Gastrocnemius medialis (tissue), 4 donors: ENCODE measurements at regions of chr20 and their contacts with region 1.

Region 1: DNA sequence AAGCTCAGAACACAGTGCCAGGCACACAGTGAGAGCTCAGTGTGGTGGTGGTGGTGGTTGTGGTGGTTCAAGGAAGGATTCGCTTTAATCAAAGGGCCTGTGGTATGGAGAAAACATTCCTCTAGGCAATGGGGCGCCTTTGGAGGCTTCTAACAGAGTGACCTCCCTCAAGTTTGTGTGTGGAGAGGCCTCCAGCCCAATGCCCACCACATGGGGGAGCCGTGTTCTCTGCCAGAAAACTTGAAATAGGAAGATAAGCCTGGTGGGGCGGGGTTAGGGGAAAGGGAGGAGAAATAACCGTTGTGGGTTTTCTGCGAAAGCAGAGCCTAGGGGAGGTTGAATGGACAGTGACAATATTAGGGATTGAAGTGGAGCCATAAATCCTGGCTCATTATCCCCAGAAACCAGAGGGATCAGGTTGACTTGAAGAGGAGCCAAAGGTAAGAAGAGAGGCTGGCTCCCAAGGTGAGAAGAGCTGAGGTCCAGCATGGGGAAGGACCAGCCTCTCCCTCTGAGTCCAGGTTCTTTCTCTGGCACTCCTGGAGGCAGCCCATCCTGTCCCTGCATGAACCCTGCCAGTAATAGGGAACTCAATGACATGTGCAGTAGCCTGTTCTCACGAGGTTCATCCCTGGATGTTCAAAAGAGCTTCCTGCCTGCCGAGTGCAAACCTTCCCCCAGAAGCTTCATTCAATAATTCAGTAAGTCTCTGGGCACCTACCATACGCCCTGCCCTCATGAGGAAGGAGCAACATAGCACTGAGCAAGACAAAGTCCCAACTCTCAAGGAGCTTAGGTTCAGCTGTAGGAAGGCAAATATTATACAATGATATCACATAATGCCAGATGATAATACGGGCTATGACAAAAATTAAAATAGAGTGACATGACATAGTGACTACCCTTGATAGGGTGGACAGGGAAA is 51.4 kb downstream of the TGM2 start:
- DNase-seq: peak; percentile 81 to 87
- ATAC-seq: peak; percentile 40 to 49
- H3K4me3 ChIP-seq: no peak overlapping the region
- H3K27ac ChIP-seq: peak overlapping the region; percentile 43 to 94 (median 68)
- H3K4me1 ChIP-seq: peaks cover 57 to 63% of the 10 kb centered on the region in 2 donors
- H3K27me3 ChIP-seq: no peaks in the 10 kb centered on the region
- CTCF ChIP-seq: peak in 1 of 5 experiments; percentile 8
- POLR2A ChIP-seq: no peak

Region 2: DNA sequence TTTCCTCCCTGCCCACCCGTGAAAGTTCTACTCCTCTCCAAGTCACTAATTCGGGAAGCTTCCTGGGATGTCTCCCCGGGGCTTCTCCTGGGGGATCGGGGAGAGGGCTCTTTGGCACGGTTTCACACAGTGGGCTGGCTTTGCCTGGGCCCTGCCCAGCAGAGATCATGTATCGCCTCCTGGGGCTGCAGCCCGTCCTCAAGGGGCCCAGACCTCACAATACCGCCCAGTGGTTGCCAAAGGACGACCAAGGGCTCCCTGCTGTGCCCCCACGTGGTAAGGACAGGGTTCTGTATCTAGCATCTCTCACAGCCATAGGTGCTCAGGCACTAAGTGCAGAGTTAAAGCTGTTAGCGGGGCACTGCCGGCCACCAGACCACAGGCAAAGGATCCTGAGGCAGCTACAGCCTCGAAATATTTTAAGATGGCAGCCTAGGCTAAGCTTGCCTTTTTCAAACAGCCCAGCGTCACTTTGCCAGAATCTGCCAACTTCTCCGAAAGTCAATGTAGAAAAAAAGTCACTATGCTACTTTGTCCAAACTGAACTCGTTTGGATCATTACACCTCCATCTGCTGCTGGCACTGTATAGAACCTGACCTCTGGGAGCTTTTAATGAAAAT is 594.0 kb before region 1 on chr20:
- in situ Hi-C with region 1: no loop called
- intact Hi-C with region 1: loop called (anchors 5 kb)
- DNase-seq: peak in 1 of 2 donors; percentile 60
- ATAC-seq: no peak
- H3K4me3 ChIP-seq: peak overlapping the region; percentile 13 to 98 (median 33)
- H3K27ac ChIP-seq: peak overlapping the region; percentile 98 to 100 (median 98)
- H3K4me1 ChIP-seq: peaks cover 90 to 92% of the 10 kb centered on the region in 2 donors
- H3K27me3 ChIP-seq: no peaks in the 10 kb centered on the region
- CTCF ChIP-seq: no peak
- POLR2A ChIP-seq: no peak

Region 3: DNA sequence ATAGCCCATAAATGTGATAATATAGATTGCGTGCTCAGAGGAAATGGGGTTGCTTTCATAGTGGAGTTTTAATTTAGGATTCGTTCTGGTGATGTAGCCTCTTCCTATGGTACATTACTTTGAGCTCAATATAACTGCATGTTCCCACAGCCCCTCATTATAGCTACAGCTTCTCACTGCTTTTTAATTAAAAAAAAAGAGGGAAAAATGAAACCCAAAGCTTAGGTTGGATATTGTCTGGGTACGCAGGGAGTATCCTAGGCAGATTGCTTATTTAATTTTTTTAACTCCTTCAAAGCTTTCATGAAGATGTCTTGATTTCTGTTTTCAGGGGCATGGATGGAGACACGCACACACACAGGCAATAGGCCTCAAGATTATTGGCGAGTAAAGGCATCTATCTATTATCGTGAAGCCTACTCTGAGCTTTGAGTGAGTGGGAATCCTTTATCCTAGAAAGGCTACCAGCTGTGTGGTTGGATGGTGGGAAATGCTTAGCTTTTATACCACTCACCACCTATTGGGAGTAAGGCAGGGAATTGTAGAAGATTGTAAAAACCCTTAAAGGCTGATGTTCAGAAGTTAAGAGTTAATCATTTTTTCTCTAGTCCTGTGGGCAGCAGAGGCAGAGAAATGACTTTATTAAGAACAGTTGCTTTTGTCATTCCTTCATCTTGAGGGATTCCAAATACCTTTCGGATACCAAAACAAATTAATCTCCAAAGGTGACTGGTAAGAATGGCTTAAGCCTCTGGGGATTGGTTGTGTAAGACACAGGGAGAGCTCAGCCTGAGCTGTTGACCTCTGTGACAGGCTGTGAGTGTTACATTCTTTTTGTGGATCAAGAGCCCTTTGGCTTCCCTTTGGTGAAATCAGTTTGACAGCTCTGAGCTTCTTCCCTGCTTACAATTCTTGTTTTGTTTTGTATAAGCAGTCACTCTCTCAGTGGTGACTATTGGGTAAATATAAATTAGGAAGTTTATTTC is 386.4 kb before region 1 on chr20:
- in situ Hi-C with region 1: no loop called
- intact Hi-C with region 1: no loop called
- DNase-seq: peak in 1 of 2 donors; percentile 19
- ATAC-seq: peak; percentile 68 to 83
- H3K4me3 ChIP-seq: no peak overlapping the region
- H3K27ac ChIP-seq: peak overlapping the region; percentile 60 to 80 (median 67)
- H3K4me1 ChIP-seq: peaks cover 52 to 63% of the 10 kb centered on the region in 2 donors
- H3K27me3 ChIP-seq: no peaks in the 10 kb centered on the region
- CTCF ChIP-seq: no peak
- POLR2A ChIP-seq: no peak

Region 4: DNA sequence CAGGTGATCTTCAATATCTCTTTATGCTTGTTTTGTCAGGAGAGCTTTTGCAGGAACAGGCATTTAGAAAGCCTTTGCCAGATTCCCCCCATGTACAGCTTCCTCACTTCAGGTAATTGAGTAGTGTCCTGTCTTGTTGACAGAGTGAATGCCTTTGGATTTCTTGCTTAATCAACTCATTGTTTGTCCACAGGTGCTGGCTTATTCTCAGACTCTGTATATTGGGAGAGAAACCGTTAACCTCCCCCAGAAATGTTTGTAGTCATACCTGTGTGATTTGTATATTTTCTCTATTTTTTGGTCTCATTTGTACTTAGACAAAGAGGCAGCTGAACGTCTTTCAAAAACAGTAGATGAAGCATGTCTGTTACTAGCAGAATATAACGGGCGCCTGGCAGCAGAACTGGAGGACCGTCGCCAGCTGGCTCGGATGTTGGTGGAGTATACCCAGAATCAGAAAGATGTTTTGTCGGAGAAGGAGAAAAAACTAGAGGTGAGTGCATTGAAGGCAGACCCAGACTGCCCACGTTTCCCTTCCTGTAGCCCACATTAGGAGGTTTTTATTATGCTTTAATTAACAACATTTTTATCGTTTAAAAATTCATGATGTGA is 47.8 kb before region 1 on chr20:
- in situ Hi-C with region 1: no loop called
- intact Hi-C with region 1: loop called (anchors 2 kb)
- DNase-seq: no peak
- ATAC-seq: no peak
- H3K4me3 ChIP-seq: no peak overlapping the region
- H3K27ac ChIP-seq: peak overlapping the region; percentile 78 to 91 (median 84)
- H3K4me1 ChIP-seq: peaks cover 32 to 41% of the 10 kb centered on the region in 2 donors
- H3K27me3 ChIP-seq: no peaks in the 10 kb centered on the region
- CTCF ChIP-seq: no peak
- POLR2A ChIP-seq: no peak

Region 5: DNA sequence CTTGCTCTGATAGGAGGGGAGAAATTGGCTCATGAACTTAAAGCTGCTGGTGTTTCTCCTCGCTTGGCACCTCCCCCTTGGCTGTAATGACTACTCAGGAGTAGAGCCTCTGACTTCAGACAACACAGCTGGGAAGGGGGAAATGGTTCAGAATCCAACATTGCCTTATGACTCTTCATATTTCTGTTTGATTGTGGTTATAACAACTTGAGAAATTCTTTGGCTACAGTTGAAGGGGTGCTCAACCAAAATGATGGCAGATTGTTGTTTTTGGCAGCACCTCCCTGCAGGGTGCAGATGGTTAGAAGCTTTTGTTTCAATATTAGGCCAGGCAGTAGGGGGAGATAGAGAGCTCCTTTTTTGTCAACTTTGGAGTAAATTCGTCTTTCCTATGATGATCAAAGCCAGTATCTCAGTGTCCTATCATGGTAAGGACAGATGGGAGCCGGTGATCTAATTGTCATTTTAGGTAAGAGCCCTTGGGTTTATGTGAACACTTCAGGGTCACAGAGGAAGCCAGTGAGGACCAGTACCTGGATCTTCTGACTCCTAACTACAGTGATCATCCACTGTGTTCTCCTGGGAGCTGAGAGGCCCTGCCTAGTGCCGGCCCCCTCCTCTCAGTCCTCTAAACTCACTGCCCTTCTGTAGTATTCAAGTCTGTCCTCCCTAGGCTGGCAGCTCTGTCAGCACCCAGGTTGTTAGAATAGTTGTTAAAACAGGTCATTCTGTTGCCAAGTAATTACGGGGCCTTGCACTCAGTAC is 40.2 kb before region 1 on chr20:
- in situ Hi-C with region 1: no loop called
- intact Hi-C with region 1: loop called (anchors 1 kb)
- DNase-seq: peak; percentile 42 to 52
- ATAC-seq: peak; percentile 59 to 64
- H3K4me3 ChIP-seq: no peak overlapping the region
- H3K27ac ChIP-seq: peak overlapping the region; percentile 83 to 88 (median 86)
- H3K4me1 ChIP-seq: peaks cover 46 to 57% of the 10 kb centered on the region in 2 donors
- H3K27me3 ChIP-seq: no peaks in the 10 kb centered on the region
- CTCF ChIP-seq: peak; percentile 59 to 80 (median 74)
- POLR2A ChIP-seq: no peak